OCI-LY7 (cell line): ENCODE measurements at regions of chr17 and their contacts with region 1.

Region 1: GRCh38 chr17:6651357-6651918 is at the starts of genes C17orf100 and MED31:
- DNase-seq: peak; percentile 95
- H3K4me3 ChIP-seq: peak within 1 kb of the TSS; percentile 91
- H3K27ac ChIP-seq: peak within 1 kb of the TSS; percentile 90
- H3K4me1 ChIP-seq: peaks cover 50% of the 10 kb centered on the region
- CTCF ChIP-seq: no peak
- total RNA-seq, gene C17orf100: 1.3 and 2.4 TPM in 2 replicates
- total RNA-seq, gene MED31: 11.6 and 14.6 TPM in 2 replicates

Region 2: GRCh38 chr17:6473128-6473767 is 178.2 kb before region 1 on chr17:
- CTCF ChIA-PET with region 1: interaction called, 9 read pairs
- POLR2A ChIA-PET with region 1: no interaction called
- intact Hi-C with region 1: loop called (anchors 1 kb)
- DNase-seq: peak; percentile 60
- H3K4me3 ChIP-seq: no peak overlapping the region
- H3K27ac ChIP-seq: no peak overlapping the region
- H3K4me1 ChIP-seq: no peaks in the 10 kb centered on the region
- CTCF ChIP-seq: peak; percentile 93

Region 3: GRCh38 chr17:6507535-6507934 is 143.9 kb before region 1 on chr17:
- CTCF ChIA-PET with region 1: no interaction called
- POLR2A ChIA-PET with region 1: no interaction called
- intact Hi-C with region 1: no loop called
- DNase-seq: no peak
- H3K4me3 ChIP-seq: no peak overlapping the region
- H3K27ac ChIP-seq: no peak overlapping the region
- H3K4me1 ChIP-seq: no peaks in the 10 kb centered on the region
- CTCF ChIP-seq: no peak

Region 4: DNA sequence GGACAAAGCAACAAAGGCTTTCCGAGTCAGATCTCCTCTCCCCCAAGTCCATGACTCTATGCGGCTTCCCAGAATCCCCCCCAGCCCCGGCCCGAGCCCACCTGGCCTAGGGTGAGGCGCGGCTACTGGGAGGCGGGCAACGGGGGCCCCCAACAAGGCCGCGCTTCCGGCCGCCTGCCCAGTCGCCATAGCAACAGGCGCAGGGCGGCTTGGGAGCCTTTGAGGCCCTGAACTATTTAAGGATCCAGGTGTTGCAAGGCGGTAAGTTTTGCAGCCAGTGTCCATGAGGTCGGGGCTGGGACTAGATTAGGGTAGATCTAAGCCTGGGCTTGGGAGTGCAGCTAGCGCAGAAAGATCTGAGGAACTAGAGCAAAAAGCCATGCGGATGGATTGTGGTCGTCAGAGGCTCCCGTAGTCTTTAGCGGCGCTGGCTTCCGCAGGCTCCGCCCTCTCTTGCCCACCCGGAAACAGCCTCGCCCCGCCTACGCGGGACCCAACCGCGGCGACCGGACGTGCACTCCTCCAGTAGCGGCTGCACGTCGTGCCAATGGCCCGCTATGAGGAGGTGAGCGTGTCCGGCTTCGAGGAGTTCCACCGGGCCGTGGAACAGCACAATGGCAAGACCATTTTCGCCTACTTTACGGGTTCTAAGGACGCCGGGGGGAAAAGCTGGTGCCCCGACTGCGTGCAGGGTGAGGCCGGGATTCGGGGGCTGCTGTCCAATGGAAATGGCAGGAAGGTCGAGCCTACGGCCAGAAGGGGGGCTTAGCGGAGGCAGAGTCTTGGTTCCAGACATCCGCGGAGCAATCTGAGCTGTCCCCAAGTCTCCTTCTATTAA is 10.7 kb before region 1 on chr17 and contains the starts of genes KIAA0753 and TXNDC17:
- CTCF ChIA-PET with region 1: no interaction called
- POLR2A ChIA-PET with region 1: interaction called, 6 read pairs
- intact Hi-C with region 1: loop called (anchors 1 kb)
- DNase-seq: peak; percentile 93
- H3K4me3 ChIP-seq: peak within 1 kb of the TSS; percentile 89
- H3K27ac ChIP-seq: peak within 1 kb of the TSS; percentile 84
- H3K4me1 ChIP-seq: peaks cover 20% of the 10 kb centered on the region
- CTCF ChIP-seq: no peak
- total RNA-seq, gene KIAA0753: 18.9 and 20.8 TPM in 2 replicates
- total RNA-seq, gene TXNDC17: 52.8 and 63.7 TPM in 2 replicates